AG04449 (cell line): ENCODE measurements at regions of chr11 and their contacts with region 1.

Region 1: DNA sequence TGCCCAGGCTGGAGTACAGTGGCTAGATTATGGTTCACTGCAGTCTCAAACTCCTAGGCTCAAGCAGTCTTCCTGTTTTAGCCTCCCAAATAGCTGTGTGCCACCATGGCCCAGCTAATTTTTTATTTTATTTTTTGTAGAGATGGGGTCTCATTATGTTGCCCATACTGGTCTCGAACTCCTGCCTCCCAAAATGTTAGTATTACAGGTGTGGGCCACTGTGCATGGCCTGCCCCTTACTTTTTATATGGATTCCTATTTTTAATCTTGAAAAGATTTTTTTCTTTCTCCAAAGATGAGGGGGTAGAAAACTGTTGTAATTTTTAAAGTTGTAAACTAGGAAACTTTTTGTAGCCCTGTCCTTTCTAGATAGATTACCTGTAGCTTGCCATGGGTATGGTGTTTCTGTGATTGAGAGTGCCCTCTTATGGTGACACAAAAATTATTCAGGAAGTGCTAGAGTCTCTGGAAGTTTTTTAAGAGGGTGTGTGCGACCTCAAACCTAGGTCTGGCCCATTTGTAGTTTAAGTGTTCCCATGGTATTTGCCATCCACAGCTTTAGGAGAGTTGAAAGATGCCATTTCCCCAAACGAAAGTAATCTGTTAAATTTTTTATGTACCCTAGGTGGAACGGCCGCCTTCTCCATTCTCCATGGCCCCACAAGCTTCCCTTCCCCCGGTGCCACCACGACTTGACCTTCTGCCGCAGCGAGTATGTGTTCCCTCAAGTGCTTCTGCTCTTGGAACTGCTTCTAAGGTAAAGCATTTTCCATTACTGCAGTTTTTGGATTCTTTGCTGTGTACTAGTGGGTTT is 32.4 kb downstream of the MCAM start:
- DNase-seq: no peak
- H3K4me3 ChIP-seq: no peak overlapping the region
- CTCF ChIP-seq: peak; percentile 31

Region 2: GRCh38 chr11:119262668-119263351 is 21.7 kb before region 1 on chr11:
- CTCF ChIA-PET with region 1: interaction called, 14 read pairs
- POLR2A ChIA-PET with region 1: no interaction called
- DNase-seq: no peak
- H3K4me3 ChIP-seq: no peak overlapping the region
- CTCF ChIP-seq: no peak

Region 3: DNA sequence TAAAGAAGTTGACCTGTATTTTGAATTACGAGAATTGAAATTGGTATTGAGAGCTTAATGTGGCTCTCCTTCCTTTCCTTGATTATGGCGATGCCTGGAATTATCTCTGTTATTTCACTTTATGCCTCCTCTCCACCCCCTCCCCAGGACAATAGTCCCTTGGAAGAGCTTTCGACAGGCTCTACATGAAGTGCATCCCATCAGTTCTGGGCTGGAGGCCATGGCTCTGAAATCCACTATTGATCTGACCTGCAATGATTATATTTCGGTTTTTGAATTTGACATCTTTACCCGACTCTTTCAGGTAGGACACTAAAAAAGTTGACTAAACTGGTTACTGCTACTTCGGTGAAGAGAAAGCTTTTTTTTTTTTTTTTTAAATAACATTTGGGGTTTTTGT is 10.8 kb before region 1 on chr11:
- CTCF ChIA-PET with region 1: interaction called, 12 read pairs
- POLR2A ChIA-PET with region 1: interaction called, 3 read pairs
- DNase-seq: no peak
- H3K4me3 ChIP-seq: no peak overlapping the region
- CTCF ChIP-seq: no peak

Region 4: GRCh38 chr11:119295178-119295577 is 10.6 kb after region 1 on chr11:
- CTCF ChIA-PET with region 1: interaction called, 11 read pairs
- POLR2A ChIA-PET with region 1: no interaction called
- DNase-seq: no peak
- H3K4me3 ChIP-seq: no peak overlapping the region
- CTCF ChIP-seq: no peak

Region 5: DNA sequence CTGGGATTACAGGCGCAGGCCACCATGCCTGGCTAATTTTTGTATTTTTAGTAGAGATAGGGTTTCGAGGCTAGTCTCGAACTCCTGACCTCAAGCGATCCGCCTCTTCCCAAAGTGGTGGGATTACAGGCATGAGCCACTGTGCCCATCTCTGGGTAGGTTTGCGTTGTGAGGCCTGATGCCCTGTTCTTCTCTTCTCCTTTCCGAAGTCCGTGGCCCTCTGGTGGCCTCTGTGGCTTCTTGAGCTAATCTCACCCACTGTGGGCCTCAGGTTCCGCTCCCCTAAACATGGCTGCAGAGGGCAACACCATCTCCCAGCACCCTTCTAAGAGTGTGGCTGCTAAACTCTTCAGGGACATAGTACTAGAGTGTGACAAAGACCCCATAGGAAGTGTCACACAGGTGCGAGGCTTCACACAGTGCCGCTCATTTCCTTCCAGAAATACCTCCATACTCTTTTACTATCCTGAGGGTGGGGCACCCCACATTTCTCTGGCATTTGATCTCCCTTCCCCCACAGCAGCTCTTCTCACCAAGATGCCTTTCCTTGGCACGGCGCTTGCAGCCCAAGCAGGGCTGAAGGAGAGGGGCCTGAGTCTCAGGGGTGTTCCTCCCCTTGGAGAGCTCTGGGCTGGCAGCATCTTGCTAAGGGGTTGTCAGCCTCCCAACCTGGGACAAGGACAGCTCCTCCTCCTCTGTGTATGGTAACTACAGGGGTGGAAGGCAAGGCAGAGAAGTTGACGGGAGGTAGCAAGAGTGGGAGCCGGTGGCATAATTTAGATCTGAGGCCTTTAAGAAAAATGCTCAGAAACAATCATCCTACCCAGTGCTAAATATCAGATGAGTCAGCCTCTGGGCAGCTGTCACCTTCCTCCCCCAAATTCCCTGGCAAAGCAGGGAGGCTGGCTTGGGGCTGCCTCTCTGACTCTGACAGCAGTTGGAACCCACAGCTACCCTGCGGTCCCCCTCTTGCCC is 132.3 kb after region 1 on chr11:
- CTCF ChIA-PET with region 1: no interaction called
- POLR2A ChIA-PET with region 1: no interaction called
- DNase-seq: no peak
- H3K4me3 ChIP-seq: no peak overlapping the region
- CTCF ChIP-seq: no peak